Activated CD4-positive, alpha-beta memory T cell treated with anti-CD3 and anti-CD28 coated beads for 36 hours (primary cell): ENCODE measurements at regions of chr9 and their contacts with region 1.

Region 1: GRCh38 chr9:35945341-35946018 is 12.5 kb downstream of the OR2S2 start:
- DNase-seq: peak; percentile 80
- H3K4me3 Mint-ChIP-seq: no peak overlapping the region
- H3K27ac Mint-ChIP-seq: no peak overlapping the region
- H3K4me1 Mint-ChIP-seq: peaks cover 63% of the 10 kb centered on the region
- H3K27me3 Mint-ChIP-seq: no peaks in the 10 kb centered on the region

Region 2: GRCh38 chr9:35891646-35892045 is 53.8 kb before region 1 on chr9:
- CTCF ChIA-PET with region 1: interaction called, 11 read pairs
- POLR2A ChIA-PET with region 1: no interaction called
- intact Hi-C with region 1: no loop called
- DNase-seq: no peak
- H3K4me3 Mint-ChIP-seq: no peak overlapping the region
- H3K27ac Mint-ChIP-seq: no peak overlapping the region
- H3K4me1 Mint-ChIP-seq: no peaks in the 10 kb centered on the region
- H3K27me3 Mint-ChIP-seq: peaks cover 11% of the 10 kb centered on the region

Region 3: GRCh38 chr9:35910613-35911359 is 34.7 kb before region 1 on chr9:
- CTCF ChIA-PET with region 1: interaction called, 25 read pairs
- POLR2A ChIA-PET with region 1: no interaction called
- intact Hi-C with region 1: no loop called
- DNase-seq: peak; percentile 70
- H3K4me3 Mint-ChIP-seq: no peak overlapping the region
- H3K27ac Mint-ChIP-seq: peak overlapping the region; percentile 42
- H3K4me1 Mint-ChIP-seq: peaks cover 53% of the 10 kb centered on the region
- H3K27me3 Mint-ChIP-seq: no peaks in the 10 kb centered on the region

Region 4: DNA sequence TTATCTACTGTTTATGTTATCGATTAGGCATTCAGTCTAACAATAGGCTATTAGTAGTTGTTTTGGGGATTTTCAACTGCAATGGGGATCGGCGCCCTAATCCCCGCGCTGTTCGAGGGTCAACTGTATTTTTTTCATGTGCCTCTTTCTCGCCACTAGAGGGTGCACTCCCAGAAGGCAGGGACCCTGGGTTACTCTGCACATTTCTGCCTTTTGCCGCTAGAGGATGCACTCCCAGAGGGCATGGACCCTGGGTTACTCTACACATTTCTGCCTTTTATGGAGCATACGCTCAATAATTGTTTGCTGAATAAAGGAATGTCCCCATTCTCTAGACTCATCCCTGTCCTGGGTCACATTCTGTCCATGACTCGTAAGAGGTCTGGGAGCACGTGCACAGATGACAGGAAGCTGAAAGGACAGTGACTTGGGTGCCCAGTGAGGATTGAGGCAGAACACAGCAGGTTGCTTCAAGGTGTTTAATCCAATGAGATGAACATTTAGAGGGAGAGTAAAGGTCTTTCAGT is 63.4 kb after region 1 on chr9:
- CTCF ChIA-PET with region 1: interaction called, 10 read pairs
- POLR2A ChIA-PET with region 1: no interaction called
- intact Hi-C with region 1: no loop called
- DNase-seq: peak; percentile 72
- H3K4me3 Mint-ChIP-seq: no peak overlapping the region
- H3K27ac Mint-ChIP-seq: no peak overlapping the region
- H3K4me1 Mint-ChIP-seq: peaks cover 26% of the 10 kb centered on the region
- H3K27me3 Mint-ChIP-seq: peaks cover 28% of the 10 kb centered on the region

Region 5: DNA sequence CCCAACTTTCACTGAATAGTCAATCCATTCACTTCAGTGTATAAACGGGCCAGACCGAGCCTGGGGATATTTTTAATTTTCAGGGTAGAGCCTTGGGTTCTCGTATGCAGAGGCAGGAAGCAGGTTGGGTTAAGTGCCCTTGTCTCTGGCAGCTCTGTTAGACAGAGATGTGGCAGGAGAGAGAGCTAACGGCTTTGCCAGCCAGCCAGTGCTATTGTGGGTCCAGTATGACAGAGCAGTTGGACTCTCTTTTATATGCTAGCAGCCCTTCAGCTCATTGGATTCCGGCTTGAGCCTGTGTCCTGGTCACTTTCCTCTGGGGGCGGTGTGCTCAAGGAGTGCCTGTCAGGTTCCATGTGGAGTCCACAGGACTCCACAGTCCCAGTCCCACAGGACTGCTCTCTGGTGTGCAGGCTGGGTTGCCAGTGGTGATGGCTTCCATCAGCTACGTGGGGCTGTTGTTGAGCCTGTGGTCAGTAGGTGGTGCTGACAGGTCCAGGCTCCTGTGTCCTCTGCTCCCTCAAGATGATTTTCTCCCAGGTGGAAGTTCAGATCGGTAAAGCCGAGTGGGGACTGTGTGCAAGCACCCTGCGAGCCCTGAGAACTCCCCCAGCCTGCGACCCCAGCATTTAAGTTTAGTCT is 259.5 kb after region 1 on chr9:
- CTCF ChIA-PET with region 1: no interaction called
- POLR2A ChIA-PET with region 1: no interaction called
- intact Hi-C with region 1: no loop called
- DNase-seq: no peak
- H3K4me3 Mint-ChIP-seq: no peak overlapping the region
- H3K27ac Mint-ChIP-seq: no peak overlapping the region
- H3K4me1 Mint-ChIP-seq: peaks cover 48% of the 10 kb centered on the region
- H3K27me3 Mint-ChIP-seq: no peaks in the 10 kb centered on the region